PC-9 (cell line): ENCODE measurements at regions of chr1 and their contacts with region 1.

Region 1: DNA sequence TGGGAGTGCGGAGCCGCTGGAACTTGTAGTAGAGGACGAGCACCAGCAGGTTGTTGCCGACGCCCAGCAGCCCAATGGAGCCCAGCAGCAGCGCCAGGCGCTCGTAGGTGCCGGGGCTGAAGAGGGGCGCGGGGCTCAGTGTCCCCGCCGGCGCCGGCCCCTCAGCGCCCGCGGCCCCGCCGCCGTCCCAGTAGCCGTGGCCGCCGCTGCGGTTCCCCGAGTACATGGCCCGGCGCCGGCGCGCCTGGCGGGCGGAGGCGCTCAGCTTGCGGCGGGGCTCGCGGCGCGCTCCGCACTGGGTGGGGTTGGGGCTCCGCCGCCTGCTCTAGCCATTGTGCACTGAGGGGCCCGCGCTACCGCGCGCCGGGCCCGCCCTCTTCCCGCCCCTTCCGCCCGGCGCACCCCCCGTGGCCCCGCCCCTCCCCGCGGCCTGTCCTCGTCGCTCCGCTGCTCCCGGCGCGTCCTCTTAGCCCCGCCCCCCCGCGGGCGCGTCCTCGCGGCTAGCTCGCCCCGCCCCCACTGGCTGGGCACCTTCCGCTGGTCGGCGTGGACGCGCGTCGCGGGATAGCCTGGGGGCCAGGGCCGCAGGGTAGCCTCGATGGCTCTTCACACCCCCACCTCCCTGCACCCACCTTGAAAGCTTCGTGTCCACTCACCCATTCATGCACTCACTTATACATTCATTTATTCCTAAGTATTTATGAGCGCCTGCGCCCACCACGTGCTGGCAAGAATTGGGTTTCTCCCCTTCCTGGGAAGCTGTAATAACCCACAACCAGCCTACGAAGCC is at the starts of genes CHML and OPN3:
- DNase-seq: peak; percentile 70 to 93
- H3K4me3 ChIP-seq: peak within 1 kb of the TSS; percentile 78
- H3K27ac ChIP-seq: peak within 1 kb of the TSS; percentile 86
- H3K4me1 ChIP-seq: peaks cover 46% of the 10 kb centered on the region
- H3K27me3 ChIP-seq: no peaks in the 10 kb centered on the region
- CTCF ChIP-seq: no peak
- total RNA-seq, gene CHML: 34.6 and 47.8 TPM in 2 replicates
- total RNA-seq, gene OPN3: 53.2 and 62.7 TPM in 2 replicates

Region 2: DNA sequence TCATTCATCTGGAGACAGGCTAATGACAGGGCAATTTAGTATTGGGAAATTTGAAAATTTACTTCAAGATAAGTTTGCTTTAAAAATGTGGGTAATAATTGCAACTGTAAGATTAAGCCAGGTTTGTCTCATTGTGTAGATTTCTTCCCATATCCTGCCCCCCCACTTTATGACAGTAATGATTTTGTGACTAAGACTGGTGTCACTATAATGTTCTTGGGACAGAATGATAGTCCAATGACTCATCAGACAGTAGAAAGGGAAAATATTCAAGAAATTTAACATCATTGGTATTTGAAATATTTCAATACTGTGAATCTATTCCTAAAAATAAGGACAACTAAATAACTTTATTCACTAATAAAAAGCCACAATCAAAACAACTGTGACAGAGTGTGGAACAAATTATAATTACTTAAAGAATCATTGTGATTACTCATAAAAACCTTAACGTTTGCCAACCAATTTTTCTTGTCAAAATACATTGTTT is 157.4 kb before region 1 on chr1:
- CTCF ChIA-PET with region 1: no interaction called
- POLR2A ChIA-PET with region 1: no interaction called
- intact Hi-C with region 1: no loop called
- DNase-seq: peak in 1 of 2 experiments; percentile 80
- H3K4me3 ChIP-seq: no peak overlapping the region
- H3K27ac ChIP-seq: peak overlapping the region; percentile 46
- H3K4me1 ChIP-seq: peaks cover 22% of the 10 kb centered on the region
- H3K27me3 ChIP-seq: no peaks in the 10 kb centered on the region
- CTCF ChIP-seq: no peak

Region 3: DNA sequence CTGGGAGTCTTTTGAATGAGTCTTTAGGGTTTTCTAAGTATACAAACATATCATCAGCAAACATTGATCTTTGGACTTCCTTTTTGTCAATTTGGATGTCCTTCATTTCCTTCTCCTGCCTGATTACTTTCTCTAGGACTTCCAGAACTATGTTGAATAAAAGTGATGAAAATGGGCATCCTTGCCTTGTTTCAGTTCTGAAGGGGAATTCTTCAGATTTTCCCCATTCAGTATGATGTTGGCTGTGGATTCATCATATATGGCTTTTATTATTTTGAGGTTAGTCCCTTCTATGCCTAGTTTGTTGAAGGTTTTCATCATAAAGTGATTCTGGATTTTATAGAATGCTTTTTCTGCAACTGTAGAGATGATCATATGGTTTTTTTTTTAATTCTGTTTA is 66.1 kb before region 1 on chr1:
- CTCF ChIA-PET with region 1: no interaction called
- POLR2A ChIA-PET with region 1: no interaction called
- intact Hi-C with region 1: no loop called
- DNase-seq: no peak
- H3K4me3 ChIP-seq: no peak overlapping the region
- H3K27ac ChIP-seq: no peak overlapping the region
- H3K4me1 ChIP-seq: no peaks in the 10 kb centered on the region
- H3K27me3 ChIP-seq: no peaks in the 10 kb centered on the region
- CTCF ChIP-seq: no peak

Region 4: GRCh38 chr1:241776916-241777315 is 136.7 kb after region 1 on chr1:
- CTCF ChIA-PET with region 1: interaction called, 4 read pairs
- POLR2A ChIA-PET with region 1: interaction called, 18 read pairs
- intact Hi-C with region 1: no loop called
- DNase-seq: no peak
- H3K4me3 ChIP-seq: no peak overlapping the region
- H3K27ac ChIP-seq: no peak overlapping the region
- H3K4me1 ChIP-seq: no peaks in the 10 kb centered on the region
- H3K27me3 ChIP-seq: no peaks in the 10 kb centered on the region
- CTCF ChIP-seq: no peak

Region 5: GRCh38 chr1:241834733-241835377 is 194.6 kb after region 1 on chr1:
- CTCF ChIA-PET with region 1: no interaction called
- POLR2A ChIA-PET with region 1: no interaction called
- intact Hi-C with region 1: loop called (anchors 1 kb)
- DNase-seq: peak; percentile 15 to 60
- H3K4me3 ChIP-seq: no peak overlapping the region
- H3K27ac ChIP-seq: no peak overlapping the region
- H3K4me1 ChIP-seq: peaks cover 17% of the 10 kb centered on the region
- H3K27me3 ChIP-seq: no peaks in the 10 kb centered on the region
- CTCF ChIP-seq: peak; percentile 82

Region 6: GRCh38 chr1:242005866-242006565 is 365.8 kb after region 1 on chr1:
- CTCF ChIA-PET with region 1: no interaction called
- POLR2A ChIA-PET with region 1: no interaction called
- intact Hi-C with region 1: loop called (anchors 2 kb)
- DNase-seq: peak in 1 of 2 experiments; percentile 43
- H3K4me3 ChIP-seq: no peak overlapping the region
- H3K27ac ChIP-seq: no peak overlapping the region
- H3K4me1 ChIP-seq: peaks cover 8% of the 10 kb centered on the region; the same call in 1 of the 2 replicates
- H3K27me3 ChIP-seq: no peaks in the 10 kb centered on the region
- CTCF ChIP-seq: no peak